Activated B cell treated with CpG ODN at 0.5 μM for 24 hours (primary cell): ENCODE measurements at regions of chr15 and their contacts with region 1.

Region 1: DNA sequence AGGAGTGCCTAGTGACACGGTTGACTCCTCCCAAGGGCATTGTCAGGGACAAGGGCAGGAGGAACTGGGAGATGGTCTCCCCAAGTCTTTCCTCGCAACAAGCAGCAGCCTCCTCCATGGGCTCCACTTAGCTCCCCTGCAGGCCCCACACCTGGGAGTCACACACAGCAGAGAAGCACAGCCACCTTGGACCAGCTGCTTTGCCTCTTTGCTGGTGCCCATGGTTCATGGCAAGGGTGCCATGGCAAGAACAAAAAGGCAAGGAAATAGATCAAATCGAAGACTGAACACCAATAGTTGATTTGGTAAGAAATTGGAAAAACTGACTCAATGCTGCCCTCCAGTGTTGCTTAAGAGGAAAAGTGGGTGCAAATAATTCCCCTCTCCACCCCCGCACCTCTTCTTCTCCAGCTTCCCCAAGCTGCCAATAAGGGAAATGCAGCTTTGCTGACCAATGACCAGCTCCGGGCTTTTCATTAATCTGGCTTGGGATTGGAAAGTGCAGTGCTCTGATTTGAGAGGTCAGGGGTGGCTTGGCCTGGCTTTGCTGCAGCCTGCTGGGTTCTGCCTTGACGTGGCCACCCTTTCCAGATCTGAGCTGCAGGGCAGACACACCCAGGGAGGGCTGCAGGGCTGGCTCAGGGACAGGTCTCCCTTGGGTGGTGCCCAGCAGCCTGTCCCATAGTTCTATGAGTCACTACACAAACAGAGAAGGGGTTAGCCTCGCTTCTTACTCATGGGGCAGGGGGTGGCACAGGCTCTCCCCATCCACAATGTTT is 162.0 kb downstream of the KLF13 start:
- DNase-seq: no peak
- ATAC-seq: peak; percentile 69
- H3K4me3 Mint-ChIP-seq: no peak overlapping the region
- H3K27ac Mint-ChIP-seq: no peak overlapping the region
- H3K4me1 Mint-ChIP-seq: peaks cover 22% of the 10 kb centered on the region
- H3K27me3 Mint-ChIP-seq: peaks cover 8% of the 10 kb centered on the region
- CTCF ChIP-seq: peak; percentile 24

Region 2: GRCh38 chr15:30962079-30962478 is 526.5 kb before region 1 on chr15:
- CTCF ChIA-PET with region 1: no interaction called
- POLR2A ChIA-PET with region 1: no interaction called
- intact Hi-C with region 1: loop called (anchors 10 kb)
- DNase-seq: no peak
- ATAC-seq: no peak
- H3K4me3 Mint-ChIP-seq: no peak overlapping the region
- H3K27ac Mint-ChIP-seq: peak overlapping the region; percentile 5
- H3K4me1 Mint-ChIP-seq: peaks cover 14% of the 10 kb centered on the region
- H3K27me3 Mint-ChIP-seq: no peaks in the 10 kb centered on the region
- CTCF ChIP-seq: no peak

Region 3: GRCh38 chr15:31215490-31216214 is 273.0 kb before region 1 on chr15:
- CTCF ChIA-PET with region 1: interaction called, 45 read pairs
- POLR2A ChIA-PET with region 1: interaction called, 30 read pairs
- intact Hi-C with region 1: loop called (anchors 1 kb)
- DNase-seq: peak; percentile 86
- ATAC-seq: peak; percentile 80
- H3K4me3 Mint-ChIP-seq: peak overlapping the region; percentile 88
- H3K27ac Mint-ChIP-seq: peak overlapping the region; percentile 93
- H3K4me1 Mint-ChIP-seq: peaks cover 44% of the 10 kb centered on the region
- H3K27me3 Mint-ChIP-seq: no peaks in the 10 kb centered on the region
- CTCF ChIP-seq: no peak

Region 4: GRCh38 chr15:31352911-31353811 is 135.5 kb before region 1 on chr15:
- CTCF ChIA-PET with region 1: interaction called, 22 read pairs
- POLR2A ChIA-PET with region 1: no interaction called
- intact Hi-C with region 1: no loop called
- DNase-seq: peak; percentile 50
- ATAC-seq: peak; percentile 71
- H3K4me3 Mint-ChIP-seq: peak overlapping the region; percentile 68
- H3K27ac Mint-ChIP-seq: peak overlapping the region; percentile 84
- H3K4me1 Mint-ChIP-seq: peaks cover 100% of the 10 kb centered on the region
- H3K27me3 Mint-ChIP-seq: no peaks in the 10 kb centered on the region
- CTCF ChIP-seq: no peak

Region 5: DNA sequence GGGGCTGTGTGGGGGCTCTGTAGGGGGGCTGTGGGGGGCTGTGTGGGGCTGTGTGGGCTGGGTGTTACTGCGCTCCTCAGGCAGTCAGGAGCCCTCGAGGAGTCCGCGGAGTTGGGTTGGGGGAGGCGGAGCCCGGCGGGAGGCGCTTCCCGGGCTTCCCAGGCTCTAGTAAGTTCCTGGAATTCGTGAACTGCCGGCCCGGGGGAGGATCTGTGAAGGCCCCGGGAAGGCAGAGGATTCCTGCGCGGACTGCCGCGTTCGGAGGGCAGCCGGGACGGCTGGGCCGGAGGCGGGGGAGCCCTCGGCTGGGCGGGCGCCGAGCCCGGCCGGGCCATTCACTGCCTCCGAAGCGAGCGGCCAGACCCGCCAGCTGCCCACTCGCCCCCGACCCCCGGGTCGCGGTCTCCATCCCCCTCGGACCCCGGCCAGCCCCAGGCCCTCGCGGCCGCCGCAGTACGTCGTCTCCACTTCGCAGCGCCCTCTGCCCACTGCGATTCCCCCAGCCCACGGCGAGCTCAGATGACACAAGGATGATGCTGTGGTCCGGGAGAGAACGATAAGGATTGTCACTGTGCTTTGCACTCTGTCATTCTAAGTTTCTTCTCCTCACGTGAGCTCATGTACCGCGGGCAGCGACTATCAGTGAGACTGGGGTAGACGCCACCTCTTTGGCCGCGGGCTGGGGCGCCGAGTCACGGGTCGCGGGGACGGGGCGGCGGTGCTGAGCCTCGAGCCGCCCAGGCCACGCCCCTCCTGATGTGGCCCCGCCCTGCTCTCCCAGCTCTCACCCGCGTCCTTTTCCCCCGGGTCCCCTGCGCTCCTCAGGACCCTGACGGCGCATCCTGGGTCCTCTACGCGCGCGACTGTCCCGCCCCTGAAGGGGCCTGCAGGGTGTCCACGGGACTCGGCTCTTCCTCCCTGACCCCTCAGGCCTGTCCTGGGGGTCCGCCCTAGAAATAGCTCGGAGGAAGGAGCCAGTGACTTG is 96.6 kb before region 1 on chr15:
- CTCF ChIA-PET with region 1: interaction called, 14 read pairs
- POLR2A ChIA-PET with region 1: interaction called, 8 read pairs
- intact Hi-C with region 1: loop called (anchors 2 kb)
- DNase-seq: peak; percentile 78
- ATAC-seq: peak; percentile 91
- H3K4me3 Mint-ChIP-seq: peak overlapping the region; percentile 87
- H3K27ac Mint-ChIP-seq: peak overlapping the region; percentile 35
- H3K4me1 Mint-ChIP-seq: peaks cover 13% of the 10 kb centered on the region
- H3K27me3 Mint-ChIP-seq: no peaks in the 10 kb centered on the region
- CTCF ChIP-seq: no peak

Region 6: GRCh38 chr15:31442203-31443111 is 46.2 kb before region 1 on chr15:
- CTCF ChIA-PET with region 1: interaction called, 226 read pairs
- POLR2A ChIA-PET with region 1: interaction called, 46 read pairs
- intact Hi-C with region 1: loop called (anchors 2 kb)
- DNase-seq: no peak
- ATAC-seq: no peak
- H3K4me3 Mint-ChIP-seq: peak overlapping the region; percentile 41
- H3K27ac Mint-ChIP-seq: peak overlapping the region; percentile 20
- H3K4me1 Mint-ChIP-seq: peaks cover 59% of the 10 kb centered on the region
- H3K27me3 Mint-ChIP-seq: no peaks in the 10 kb centered on the region
- CTCF ChIP-seq: no peak

Region 7: DNA sequence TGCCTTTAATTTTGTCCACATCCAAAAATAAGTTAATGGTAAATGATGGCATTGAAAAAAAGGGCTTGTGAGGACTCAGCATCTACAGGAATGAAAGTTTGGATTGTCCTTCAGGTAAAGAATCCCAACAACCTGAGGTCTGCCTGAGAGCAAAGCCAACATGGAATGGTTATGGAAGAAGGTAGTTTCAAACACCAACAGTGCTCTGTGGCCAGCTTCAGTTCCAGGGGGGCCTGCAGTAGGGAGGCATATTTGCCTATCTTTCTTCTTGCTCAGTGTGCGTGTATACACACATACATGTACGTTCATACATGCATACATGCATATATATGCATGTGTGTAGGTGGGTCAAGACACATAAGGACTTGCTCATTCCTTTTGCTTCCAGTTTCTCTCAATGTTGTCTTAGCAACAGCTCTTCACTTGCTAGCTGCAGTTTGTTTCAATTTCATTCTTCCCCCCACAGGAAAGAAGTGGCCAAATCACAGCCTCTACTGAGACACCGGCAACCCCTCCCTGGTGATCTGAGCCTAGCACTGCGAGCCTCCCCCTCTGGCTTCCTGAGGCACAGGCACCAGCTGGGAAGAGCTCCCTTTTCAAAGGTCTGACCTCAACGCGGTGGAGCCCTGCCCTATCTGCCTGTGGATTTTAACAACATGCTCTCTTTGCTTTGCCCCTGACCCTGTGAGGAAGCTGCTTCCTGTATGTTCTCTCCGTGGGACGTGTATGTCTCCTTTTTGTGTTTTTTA is 15.8 kb before region 1 on chr15:
- CTCF ChIA-PET with region 1: interaction called, 53 read pairs
- POLR2A ChIA-PET with region 1: interaction called, 4 read pairs
- intact Hi-C with region 1: no loop called
- DNase-seq: no peak
- ATAC-seq: peak; percentile 80
- H3K4me3 Mint-ChIP-seq: peak overlapping the region; percentile 80
- H3K27ac Mint-ChIP-seq: peak overlapping the region; percentile 93
- H3K4me1 Mint-ChIP-seq: peaks cover 45% of the 10 kb centered on the region
- H3K27me3 Mint-ChIP-seq: no peaks in the 10 kb centered on the region
- CTCF ChIP-seq: no peak